ENCODE measurements at regions of chr3 and their contacts with region 1.

Region 1: GRCh38 chr3:41961750-41962679 is at the start of gene ULK4:
- DNase-seq: peak; percentile 77 to 96 (median 94)
- ATAC-seq: peak; percentile 93
- H3K4me3 ChIP-seq: peak within 1 kb of the TSS; percentile 99
- H3K4me3 Mint-ChIP-seq: peak within 1 kb of the TSS; percentile 90 to 100 (median 98)
- H3K27ac ChIP-seq: peak within 1 kb of the TSS; percentile 83
- H3K27ac Mint-ChIP-seq: peak within 1 kb of the TSS; percentile 88 to 100 (median 96)
- H3K4me1 ChIP-seq: peaks cover 0 to 16% of the 10 kb centered on the region in 2 donors
- H3K4me1 Mint-ChIP-seq: peaks cover 8 to 22% (median 16%) of the 10 kb centered on the region in 7 donors
- H3K27me3 ChIP-seq: no peaks in the 10 kb centered on the region
- H3K27me3 Mint-ChIP-seq: peaks cover 0 to 3% (median 0%) of the 10 kb centered on the region in 5 donors
- total RNA-seq, gene ULK4: 14.0 to 22.3 (median 21.1) TPM

Region 2: DNA sequence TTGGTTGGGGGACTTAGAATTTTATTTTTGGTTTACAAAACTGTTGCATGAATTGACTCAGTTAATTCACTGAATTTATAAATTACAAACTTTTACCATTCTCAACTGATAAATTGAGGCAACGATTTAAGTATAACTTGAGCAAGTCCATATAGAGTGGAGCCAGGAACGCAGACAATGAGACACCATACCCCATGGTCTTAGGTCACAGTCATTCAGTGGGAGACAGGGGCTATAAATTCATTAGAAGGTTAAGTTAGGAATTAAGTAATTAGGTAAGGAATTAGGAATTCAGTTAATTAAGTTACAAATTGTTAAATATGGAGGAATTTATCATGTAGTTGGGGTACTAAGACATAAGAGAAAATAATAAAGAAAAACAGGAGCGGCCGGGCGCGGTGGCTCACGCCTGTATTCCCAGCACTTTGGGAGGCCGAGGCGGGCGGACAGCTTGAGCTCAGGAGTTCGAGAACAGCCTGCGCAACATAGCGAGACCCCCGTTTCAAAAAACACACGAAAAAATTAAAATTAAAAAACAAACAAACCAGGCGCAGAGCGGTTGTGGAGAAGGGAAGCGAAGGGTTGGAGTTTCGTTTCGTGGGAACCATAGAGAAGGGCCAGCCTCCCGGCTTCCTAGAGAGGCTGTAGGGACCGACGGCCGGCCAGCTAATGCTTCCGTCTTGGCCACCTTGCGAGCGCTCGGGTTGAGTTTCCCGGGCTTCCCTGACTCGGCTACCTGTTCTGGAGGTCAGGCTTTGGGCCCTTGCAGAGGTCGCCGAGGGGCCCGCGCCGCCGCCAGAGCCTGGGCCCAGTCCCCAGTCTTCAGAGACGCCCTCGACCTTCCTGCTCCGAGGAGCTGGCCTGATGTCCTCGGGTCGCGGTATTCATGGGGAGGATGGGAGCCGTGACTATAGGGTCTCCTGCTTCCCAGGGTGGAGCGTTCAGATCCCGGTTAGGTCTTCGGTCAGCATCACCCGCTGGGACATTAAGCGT is 1485.2 kb before region 1 on chr3 and contains the start of gene ZNF619:
- CTCF ChIA-PET with region 1: no interaction called
- POLR2A ChIA-PET with region 1: no interaction called
- intact Hi-C with region 1: loop called in 1 of 2 experiments (anchors 1 kb)
- DNase-seq: peak; percentile 11 to 60 (median 47)
- ATAC-seq: peak; percentile 93
- H3K4me3 ChIP-seq: peak within 1 kb of the TSS; percentile 82
- H3K4me3 Mint-ChIP-seq: peak within 1 kb of the TSS; percentile 84 to 97 (median 89)
- H3K27ac ChIP-seq: peak within 1 kb of the TSS; percentile 80
- H3K27ac Mint-ChIP-seq: peak within 1 kb of the TSS; percentile 61 to 97 (median 90)
- H3K4me1 ChIP-seq: peaks cover 7 to 8% of the 10 kb centered on the region in 2 donors
- H3K4me1 Mint-ChIP-seq: peaks cover 13 to 38% (median 31%) of the 10 kb centered on the region in 7 donors
- H3K27me3 ChIP-seq: no peaks in the 10 kb centered on the region
- H3K27me3 Mint-ChIP-seq: no peaks in the 10 kb centered on the region
- total RNA-seq, gene ZNF619: 5.0 to 13.9 (median 12.3) TPM

Region 3: DNA sequence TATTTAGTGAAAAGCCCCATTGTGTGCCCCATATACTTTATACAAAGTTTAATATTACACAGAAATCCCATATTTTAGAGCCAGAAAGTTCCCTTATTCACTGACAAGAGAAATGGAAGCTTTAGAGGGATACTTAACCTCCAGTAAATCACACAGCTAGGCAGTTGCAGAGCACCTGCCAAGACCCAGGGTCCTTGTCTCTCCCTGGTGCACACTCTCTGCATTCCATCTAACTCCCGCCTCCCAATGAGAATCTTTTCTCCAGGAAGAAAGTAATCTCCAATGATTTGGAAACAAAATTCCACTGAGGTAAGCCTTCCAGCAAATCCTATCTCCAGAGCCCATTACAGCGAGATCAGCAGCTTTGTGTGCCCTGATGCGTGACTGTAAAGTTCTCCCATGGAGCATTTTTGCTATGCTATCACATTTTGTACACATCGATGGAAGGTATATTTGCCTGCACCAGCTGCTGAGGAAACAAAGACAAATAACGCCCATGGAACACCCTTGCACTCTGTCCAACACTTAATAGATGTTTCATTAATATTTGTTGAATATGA is 41.5 kb before region 1 on chr3:
- CTCF ChIA-PET with region 1: no interaction called
- POLR2A ChIA-PET with region 1: no interaction called
- intact Hi-C with region 1: loop called in 1 of 2 experiments (anchors 5 kb)
- DNase-seq: no peak
- ATAC-seq: no peak
- H3K4me3 ChIP-seq: no peak overlapping the region
- H3K4me3 Mint-ChIP-seq: no peak overlapping the region
- H3K27ac ChIP-seq: no peak overlapping the region
- H3K27ac Mint-ChIP-seq: no peak overlapping the region
- H3K4me1 ChIP-seq: no peaks in the 10 kb centered on the region
- H3K4me1 Mint-ChIP-seq: peaks cover 0 to 5% (median 0%) of the 10 kb centered on the region in 7 donors
- H3K27me3 ChIP-seq: no peaks in the 10 kb centered on the region
- H3K27me3 Mint-ChIP-seq: no peaks in the 10 kb centered on the region

Region 4: GRCh38 chr3:42101048-42101447 is 139.0 kb after region 1 on chr3:
- CTCF ChIA-PET with region 1: no interaction called
- POLR2A ChIA-PET with region 1: no interaction called
- intact Hi-C with region 1: loop called (anchors 1 to 2 kb)
- DNase-seq: no peak
- ATAC-seq: peak; percentile 46
- H3K4me3 ChIP-seq: no peak overlapping the region
- H3K4me3 Mint-ChIP-seq: no peak overlapping the region
- H3K27ac ChIP-seq: no peak overlapping the region
- H3K27ac Mint-ChIP-seq: no peak overlapping the region
- H3K4me1 ChIP-seq: no peaks in the 10 kb centered on the region
- H3K4me1 Mint-ChIP-seq: peaks cover 0 to 23% (median 10%) of the 10 kb centered on the region in 7 donors
- H3K27me3 ChIP-seq: no peaks in the 10 kb centered on the region
- H3K27me3 Mint-ChIP-seq: no peaks in the 10 kb centered on the region

Region 5: DNA sequence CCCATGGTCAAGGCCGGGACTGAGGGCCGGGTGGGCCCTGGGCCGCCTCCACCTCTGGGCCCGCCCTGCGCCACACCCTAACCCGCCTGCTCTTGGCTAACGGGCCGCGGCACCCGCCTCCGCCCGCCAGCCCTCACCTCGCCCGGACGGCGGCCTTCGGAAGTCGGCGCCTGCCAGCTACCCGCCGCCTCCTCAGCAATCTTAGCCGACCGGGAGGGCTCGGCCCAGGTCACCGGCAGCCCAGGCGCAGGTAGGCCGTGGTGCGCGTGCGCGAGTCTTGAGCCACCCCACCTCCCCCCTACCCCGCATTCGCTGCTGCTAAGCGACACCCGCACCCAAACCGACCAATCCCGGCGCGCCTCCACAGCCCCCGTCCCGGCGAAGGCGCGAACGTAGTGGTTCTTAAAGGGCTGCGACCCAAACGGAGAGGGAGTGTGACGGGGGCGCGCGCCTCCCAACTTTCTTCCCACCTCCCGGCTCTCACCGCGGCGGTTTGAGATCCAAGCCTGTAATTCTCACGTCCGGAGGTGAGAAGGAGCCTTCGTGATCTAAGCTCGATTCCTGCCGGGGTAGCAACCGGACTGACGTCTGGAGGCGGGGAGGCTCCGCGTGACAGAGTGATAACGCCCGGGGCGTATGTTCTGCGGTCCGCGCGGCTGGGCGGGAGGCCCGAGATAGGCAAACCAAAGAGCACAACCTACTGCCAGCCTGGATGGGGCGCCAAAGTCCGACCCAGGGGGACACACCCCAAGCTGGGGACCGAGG is 619.9 kb after region 1 on chr3 and contains the start of gene SEC22C:
- CTCF ChIA-PET with region 1: no interaction called
- POLR2A ChIA-PET with region 1: no interaction called
- intact Hi-C with region 1: loop called in 1 of 2 experiments (anchors 1 kb)
- DNase-seq: peak; percentile 86 to 95 (median 94)
- ATAC-seq: peak; percentile 94
- H3K4me3 ChIP-seq: peak within 1 kb of the TSS; percentile 86
- H3K4me3 Mint-ChIP-seq: peak within 1 kb of the TSS; percentile 77 to 97 (median 94)
- H3K27ac ChIP-seq: peak within 1 kb of the TSS; percentile 92
- H3K27ac Mint-ChIP-seq: peak within 1 kb of the TSS; percentile 89 to 99 (median 96)
- H3K4me1 ChIP-seq: peaks cover 19 to 25% of the 10 kb centered on the region in 2 donors
- H3K4me1 Mint-ChIP-seq: peaks cover 31 to 60% (median 57%) of the 10 kb centered on the region in 7 donors
- H3K27me3 ChIP-seq: no peaks in the 10 kb centered on the region
- H3K27me3 Mint-ChIP-seq: no peaks in the 10 kb centered on the region
- total RNA-seq, gene SEC22C: 39.7 to 54.8 (median 51.3) TPM

Region 6: GRCh38 chr3:43031485-43031884 is 1069.5 kb after region 1 on chr3:
- CTCF ChIA-PET with region 1: no interaction called
- POLR2A ChIA-PET with region 1: no interaction called
- intact Hi-C with region 1: no loop called
- DNase-seq: no peak
- ATAC-seq: peak; percentile 12
- H3K4me3 ChIP-seq: no peak overlapping the region
- H3K4me3 Mint-ChIP-seq: no peak overlapping the region
- H3K27ac ChIP-seq: no peak overlapping the region
- H3K27ac Mint-ChIP-seq: no peak overlapping the region
- H3K4me1 ChIP-seq: peaks cover 0 to 7% of the 10 kb centered on the region in 2 donors
- H3K4me1 Mint-ChIP-seq: peaks cover 0 to 36% (median 33%) of the 10 kb centered on the region in 7 donors
- H3K27me3 ChIP-seq: no peaks in the 10 kb centered on the region
- H3K27me3 Mint-ChIP-seq: peaks cover 0 to 1% (median 0%) of the 10 kb centered on the region in 5 donors

Measured in naive thymus-derived CD4-positive, alpha-beta T cell (primary cell).